Dendritic cell treated with granulocyte-macrophage colony-stimulating factor and Interleukin-4, amounts not matched to agents 40 ng/mL and 50 ng/mL, for 4 days (primary cell): ENCODE measurements at regions of chr2 and their contacts with region 1.

Region 1: GRCh38 chr2:28342081-28342967 is 50.3 kb upstream of the FOSL2 start:
- H3K4me3 Mint-ChIP-seq: peak overlapping the region; percentile 20
- H3K27ac Mint-ChIP-seq: peak overlapping the region; percentile 54
- H3K4me1 Mint-ChIP-seq: peaks cover 42% of the 10 kb centered on the region
- H3K27me3 Mint-ChIP-seq: peaks cover 5% of the 10 kb centered on the region

Region 2: DNA sequence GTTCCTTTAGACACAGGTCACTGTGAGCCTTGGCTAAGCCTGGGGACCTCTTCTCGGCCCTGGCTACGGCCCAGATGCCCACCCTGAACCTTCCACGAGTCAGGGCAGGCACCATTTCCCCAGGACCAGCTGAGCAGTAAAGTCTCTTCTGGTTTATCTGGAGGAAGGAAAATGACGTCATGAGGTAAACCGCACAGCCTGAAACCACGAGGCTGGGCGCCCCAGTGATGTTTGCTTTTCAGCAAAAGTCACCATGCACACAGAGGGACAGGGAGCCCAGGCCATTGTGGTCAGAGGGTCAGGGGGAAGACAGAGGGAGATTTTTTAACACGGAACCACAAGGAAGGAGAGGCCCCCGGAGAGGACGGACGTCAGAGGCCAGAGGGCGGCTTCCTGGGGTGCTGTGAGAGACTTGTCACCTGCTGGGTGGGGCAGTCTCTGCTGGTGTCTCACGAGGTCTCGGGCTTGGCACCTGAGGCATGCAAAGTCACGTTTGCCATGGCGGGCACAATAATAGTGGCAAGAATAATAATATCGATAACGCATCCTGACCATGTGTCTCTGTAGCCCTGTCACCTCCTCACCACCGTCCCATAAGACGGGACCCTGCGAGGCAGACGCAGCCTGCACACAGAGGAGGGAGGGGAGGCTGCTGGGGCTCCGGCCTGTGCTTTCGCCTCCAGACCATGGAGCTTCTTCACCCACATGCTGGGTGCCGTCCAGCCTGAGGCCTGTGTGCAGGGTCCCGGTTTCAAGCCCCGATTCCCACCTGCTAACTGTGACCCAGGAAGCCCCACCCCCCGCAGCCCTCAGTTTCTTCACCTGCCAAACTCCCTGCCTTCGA is 17.1 kb after region 1 on chr2:
- intact Hi-C with region 1: loop called (anchors 2 kb)
- H3K4me3 Mint-ChIP-seq: peak overlapping the region; percentile 18
- H3K27ac Mint-ChIP-seq: peak overlapping the region; percentile 75
- H3K4me1 Mint-ChIP-seq: peaks cover 79% of the 10 kb centered on the region
- H3K27me3 Mint-ChIP-seq: peaks cover 59% of the 10 kb centered on the region

Region 3: GRCh38 chr2:28377984-28378678 is 35.8 kb after region 1 on chr2:
- intact Hi-C with region 1: loop called (anchors 5 kb)
- H3K4me3 Mint-ChIP-seq: peak overlapping the region; percentile 39
- H3K27ac Mint-ChIP-seq: peak overlapping the region; percentile 34
- H3K4me1 Mint-ChIP-seq: peaks cover 46% of the 10 kb centered on the region
- H3K27me3 Mint-ChIP-seq: peaks cover 38% of the 10 kb centered on the region

Region 4: GRCh38 chr2:28894470-28895177 is 552.3 kb after region 1 on chr2 and contains the start of gene WDR43:
- intact Hi-C with region 1: no loop called
- H3K4me3 Mint-ChIP-seq: peak within 1 kb of the TSS; percentile 99
- H3K27ac Mint-ChIP-seq: peak within 1 kb of the TSS; percentile 88
- H3K4me1 Mint-ChIP-seq: peaks cover 26% of the 10 kb centered on the region
- H3K27me3 Mint-ChIP-seq: no peaks in the 10 kb centered on the region

Region 5: GRCh38 chr2:29606104-29607037 is 1264.0 kb after region 1 on chr2:
- intact Hi-C with region 1: no loop called
- H3K4me3 Mint-ChIP-seq: no peak overlapping the region
- H3K27ac Mint-ChIP-seq: no peak overlapping the region
- H3K4me1 Mint-ChIP-seq: peaks cover 11% of the 10 kb centered on the region
- H3K27me3 Mint-ChIP-seq: no peaks in the 10 kb centered on the region